Posterior vena cava (tissue), 2 donors: ENCODE measurements at regions of chr6 and their contacts with region 1.

Region 1: DNA sequence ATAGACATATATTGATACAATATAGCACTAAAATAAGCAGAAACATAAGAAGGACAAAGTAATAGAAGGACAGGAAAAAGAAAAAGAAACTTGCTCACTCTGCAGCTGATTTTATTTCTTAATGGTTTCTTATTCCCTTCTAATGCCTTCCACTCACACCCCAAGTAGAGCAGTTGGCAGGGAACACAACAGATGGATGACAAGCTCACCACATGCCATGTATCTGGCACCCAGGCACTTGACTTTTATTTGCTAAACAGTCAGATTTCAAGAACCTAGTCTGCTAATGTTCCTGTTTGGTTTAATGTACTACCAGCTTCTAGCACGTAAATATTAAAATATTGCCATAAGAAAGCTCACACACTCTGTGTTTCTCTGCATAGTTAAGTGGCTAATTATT is 87.1 kb downstream of the COL19A1 start:
- DNase-seq: no peak

Region 2: GRCh38 chr6:68427630-68428029 is 1525.9 kb before region 1 on chr6:
- intact Hi-C with region 1: loop called in 1 of 2 experiments (anchors 10 kb)
- DNase-seq: no peak

Region 3: GRCh38 chr6:69866770-69867638 is 86.5 kb before region 1 on chr6:
- intact Hi-C with region 1: no loop called
- DNase-seq: peak; percentile 85